Mammary epithelial cell (primary cell): ENCODE measurements at regions of chr10 and their contacts with region 1.

Region 1: GRCh38 chr10:77949167-77949566 is 22.6 kb upstream of the DLG5 start:
- DNase-seq: peak; percentile 97
- H3K4me3 ChIP-seq: no peak overlapping the region
- H3K27ac ChIP-seq: peak overlapping the region; percentile 59
- H3K4me1 ChIP-seq: peaks cover 18% of the 10 kb centered on the region
- H3K27me3 ChIP-seq: no peaks in the 10 kb centered on the region
- CTCF ChIP-seq: no peak

Region 2: GRCh38 chr10:77763453-77764430 is 185.4 kb before region 1 on chr10:
- CTCF ChIA-PET with region 1: no interaction called
- dilution Hi-C with region 1: no loop called
- in situ Hi-C with region 1: no loop called
- intact Hi-C with region 1: no loop called
- DNase-seq: no peak
- H3K4me3 ChIP-seq: no peak overlapping the region
- H3K27ac ChIP-seq: no peak overlapping the region
- H3K4me1 ChIP-seq: no peaks in the 10 kb centered on the region
- H3K27me3 ChIP-seq: no peaks in the 10 kb centered on the region
- CTCF ChIP-seq: no peak

Region 3: GRCh38 chr10:77932016-77932715 is 17.0 kb before region 1 on chr10:
- CTCF ChIA-PET with region 1: interaction called, 21 read pairs
- dilution Hi-C with region 1: no loop called
- in situ Hi-C with region 1: no loop called
- intact Hi-C with region 1: loop called (anchors 2 kb)
- DNase-seq: peak; percentile 52
- H3K4me3 ChIP-seq: no peak overlapping the region
- H3K27ac ChIP-seq: no peak overlapping the region
- H3K4me1 ChIP-seq: peaks cover 15% of the 10 kb centered on the region
- H3K27me3 ChIP-seq: no peaks in the 10 kb centered on the region
- CTCF ChIP-seq: no peak